Naive thymus-derived CD8-positive, alpha-beta T cell (primary cell): ENCODE measurements at regions of chr15 and their contacts with region 1.

Region 1: DNA sequence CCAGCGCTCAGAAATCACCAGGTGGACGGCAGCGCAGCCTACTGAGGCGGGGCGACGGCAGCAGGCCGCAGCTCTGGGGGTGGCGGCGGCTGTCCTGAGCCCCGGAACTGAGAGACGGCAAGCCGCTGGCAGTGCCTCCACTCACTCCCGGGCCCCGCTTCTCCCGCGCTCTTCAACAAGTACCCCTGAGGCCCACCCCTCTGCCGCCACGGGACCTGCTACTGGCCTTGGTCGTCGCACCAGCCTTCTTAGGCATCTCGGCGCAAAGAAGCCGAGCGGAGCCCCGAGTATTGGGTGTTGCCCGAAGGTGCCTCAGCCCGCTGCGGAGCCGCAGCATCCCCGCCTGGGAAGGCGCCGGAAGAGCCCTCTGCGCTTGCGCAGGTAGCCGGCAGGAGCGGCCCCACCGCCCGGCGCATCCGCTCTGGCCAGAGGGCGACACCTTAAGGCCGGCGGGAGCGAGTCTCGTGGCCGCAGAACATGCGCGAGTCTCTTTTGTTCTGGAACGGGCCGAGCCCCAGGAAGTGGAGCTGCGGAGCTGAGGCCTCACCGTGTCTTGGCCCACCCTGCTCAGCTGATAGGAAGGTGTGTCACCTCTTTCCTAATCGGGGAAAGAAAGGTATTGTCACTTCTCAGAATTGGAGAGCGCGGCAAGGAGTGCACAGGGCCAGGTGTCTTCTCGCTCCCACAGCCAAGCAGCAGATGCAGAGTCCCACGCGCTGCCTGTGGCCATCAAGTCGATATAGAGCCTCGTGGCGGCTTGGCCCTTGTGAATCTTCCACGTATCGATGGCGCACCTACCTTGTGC is at the start of gene C15orf40:
- DNase-seq: peak; percentile 69 to 88 (median 81)
- ATAC-seq: peak; percentile 79 to 86
- H3K4me3 Mint-ChIP-seq: peak within 1 kb of the TSS; percentile 86 to 100 (median 98)
- H3K27ac Mint-ChIP-seq: peak within 1 kb of the TSS; percentile 87 to 96 (median 92)
- H3K4me1 Mint-ChIP-seq: peaks cover 36 to 57% (median 49%) of the 10 kb centered on the region in 4 donors
- H3K27me3 Mint-ChIP-seq: no peaks in the 10 kb centered on the region
- polyA plus RNA-seq, gene C15orf40: 56.2 to 87.5 (median 67.8) TPM

Region 2: DNA sequence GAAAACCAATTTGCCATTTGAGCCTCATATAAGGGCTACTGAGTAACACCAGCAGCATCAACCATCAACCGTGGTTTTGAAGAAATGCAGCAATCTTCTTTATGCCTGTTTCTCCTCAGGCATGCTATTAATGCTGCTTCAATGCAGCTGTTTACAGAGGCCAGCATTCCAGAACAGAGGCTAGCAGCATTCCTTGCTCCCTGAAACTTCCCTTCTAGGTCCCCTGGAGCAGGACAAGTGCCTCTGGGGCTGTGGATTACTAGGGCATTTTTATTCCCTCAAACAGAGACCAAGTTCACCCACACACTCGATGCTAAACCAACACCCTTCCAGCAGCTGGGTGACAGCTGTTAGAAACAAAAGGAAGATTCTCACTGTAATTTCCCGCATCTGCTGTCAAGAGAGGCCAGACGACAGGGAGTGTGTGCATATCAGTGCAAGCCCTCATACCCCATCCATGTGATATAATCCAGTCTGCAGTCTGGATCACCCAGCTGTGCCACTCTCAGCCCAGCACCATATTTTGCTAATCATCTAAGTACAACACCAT is 116.4 kb before region 1 on chr15:
- POLR2A ChIA-PET with region 1: no interaction called
- DNase-seq: no peak
- ATAC-seq: no peak
- H3K4me3 Mint-ChIP-seq: no peak overlapping the region
- H3K27ac Mint-ChIP-seq: no peak overlapping the region
- H3K4me1 Mint-ChIP-seq: no peaks in the 10 kb centered on the region
- H3K27me3 Mint-ChIP-seq: peaks cover 0 to 3% (median 0%) of the 10 kb centered on the region in 5 donors

Region 3: GRCh38 chr15:82985688-82986441 is 25.6 kb before region 1 on chr15 and contains the start of gene RAMAC:
- POLR2A ChIA-PET with region 1: interaction called, 12 read pairs
- DNase-seq: peak; percentile 83 to 99 (median 92)
- ATAC-seq: peak; percentile 94
- H3K4me3 Mint-ChIP-seq: peak within 1 kb of the TSS; percentile 95 to 99 (median 99)
- H3K27ac Mint-ChIP-seq: peak within 1 kb of the TSS; percentile 89 to 99 (median 97)
- H3K4me1 Mint-ChIP-seq: peaks cover 9 to 35% (median 25%) of the 10 kb centered on the region in 4 donors
- H3K27me3 Mint-ChIP-seq: no peaks in the 10 kb centered on the region
- polyA plus RNA-seq, gene RAMAC: 28.5 to 35.0 (median 31.7) TPM

Region 4: GRCh38 chr15:83066734-83067637 is 55.5 kb after region 1 on chr15 and contains the start of gene BTBD1:
- POLR2A ChIA-PET with region 1: interaction called, 20 read pairs
- DNase-seq: peak; percentile 63 to 85 (median 75)
- ATAC-seq: peak; percentile 76 to 84
- H3K4me3 Mint-ChIP-seq: peak within 1 kb of the TSS in 9 of 10 donors; percentile 63 to 90 (median 73)
- H3K27ac Mint-ChIP-seq: peak within 1 kb of the TSS in 9 of 10 donors; percentile 73 to 92 (median 87)
- H3K4me1 Mint-ChIP-seq: peaks cover 7 to 32% (median 14%) of the 10 kb centered on the region in 4 donors
- H3K27me3 Mint-ChIP-seq: no peaks in the 10 kb centered on the region
- polyA plus RNA-seq, gene BTBD1: 36.0 to 40.6 (median 37.0) TPM